Mammary epithelial cell (primary cell): ENCODE measurements at regions of chr5 and their contacts with region 1.

Region 1: GRCh38 chr5:167820101-167820990 is 471.1 kb upstream of the WWC1 start:
- DNase-seq: peak; percentile 7
- H3K4me3 ChIP-seq: peak overlapping the region; percentile 30 to 66 (median 61)
- H3K27ac ChIP-seq: peak overlapping the region; percentile 87
- H3K4me1 ChIP-seq: peaks cover 43% of the 10 kb centered on the region
- H3K27me3 ChIP-seq: no peaks in the 10 kb centered on the region
- CTCF ChIP-seq: no peak

Region 2: DNA sequence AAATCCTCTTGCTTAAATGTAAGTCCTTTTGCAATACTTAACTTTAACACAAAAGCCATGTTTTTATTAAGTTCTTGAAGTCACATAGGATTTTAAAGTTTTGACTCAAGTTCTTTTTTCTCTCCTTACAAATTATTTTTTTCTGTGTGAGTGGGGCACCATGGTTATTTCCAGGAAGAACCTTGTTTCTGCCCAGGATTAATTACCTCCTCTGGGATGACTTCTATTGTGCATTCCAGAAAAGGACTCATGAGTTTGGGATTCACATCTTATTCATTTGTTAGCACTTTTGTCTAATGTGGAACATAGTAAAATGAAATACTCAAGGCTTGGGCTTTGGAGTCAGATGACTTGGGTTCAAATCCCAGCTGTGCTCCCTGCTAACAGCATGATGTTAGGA is 49.7 kb after region 1 on chr5:
- CTCF ChIA-PET with region 1: no interaction called
- dilution Hi-C with region 1: no loop called
- in situ Hi-C with region 1: no loop called
- intact Hi-C with region 1: no loop called
- DNase-seq: no peak
- H3K4me3 ChIP-seq: no peak overlapping the region
- H3K27ac ChIP-seq: no peak overlapping the region
- H3K4me1 ChIP-seq: no peaks in the 10 kb centered on the region
- H3K27me3 ChIP-seq: no peaks in the 10 kb centered on the region
- CTCF ChIP-seq: no peak

Region 3: GRCh38 chr5:167998148-167998767 is 177.9 kb after region 1 on chr5:
- CTCF ChIA-PET with region 1: no interaction called
- dilution Hi-C with region 1: no loop called
- in situ Hi-C with region 1: no loop called
- intact Hi-C with region 1: loop called (anchors 5 kb)
- DNase-seq: no peak
- H3K4me3 ChIP-seq: no peak overlapping the region
- H3K27ac ChIP-seq: no peak overlapping the region
- H3K4me1 ChIP-seq: peaks cover 24% of the 10 kb centered on the region
- H3K27me3 ChIP-seq: no peaks in the 10 kb centered on the region
- CTCF ChIP-seq: no peak